HEK293T (cell line): ENCODE measurements at regions of chr17 and their contacts with region 1.

Region 1: GRCh38 chr17:19377602-19378392 is 501 bp upstream of the MAPK7 start:
- DNase-seq: peak; percentile 99

Region 2: GRCh38 chr17:19315104-19315503 is 62.7 kb before region 1 on chr17:
- CTCF ChIA-PET with region 1: no interaction called
- POLR2A ChIA-PET with region 1: no interaction called
- DNase-seq: no peak

Region 3: GRCh38 chr17:19398301-19399181 is 20.7 kb after region 1 on chr17:
- CTCF ChIA-PET with region 1: interaction called, 3 read pairs
- POLR2A ChIA-PET with region 1: interaction called, 112 read pairs
- DNase-seq: no peak

Region 4: DNA sequence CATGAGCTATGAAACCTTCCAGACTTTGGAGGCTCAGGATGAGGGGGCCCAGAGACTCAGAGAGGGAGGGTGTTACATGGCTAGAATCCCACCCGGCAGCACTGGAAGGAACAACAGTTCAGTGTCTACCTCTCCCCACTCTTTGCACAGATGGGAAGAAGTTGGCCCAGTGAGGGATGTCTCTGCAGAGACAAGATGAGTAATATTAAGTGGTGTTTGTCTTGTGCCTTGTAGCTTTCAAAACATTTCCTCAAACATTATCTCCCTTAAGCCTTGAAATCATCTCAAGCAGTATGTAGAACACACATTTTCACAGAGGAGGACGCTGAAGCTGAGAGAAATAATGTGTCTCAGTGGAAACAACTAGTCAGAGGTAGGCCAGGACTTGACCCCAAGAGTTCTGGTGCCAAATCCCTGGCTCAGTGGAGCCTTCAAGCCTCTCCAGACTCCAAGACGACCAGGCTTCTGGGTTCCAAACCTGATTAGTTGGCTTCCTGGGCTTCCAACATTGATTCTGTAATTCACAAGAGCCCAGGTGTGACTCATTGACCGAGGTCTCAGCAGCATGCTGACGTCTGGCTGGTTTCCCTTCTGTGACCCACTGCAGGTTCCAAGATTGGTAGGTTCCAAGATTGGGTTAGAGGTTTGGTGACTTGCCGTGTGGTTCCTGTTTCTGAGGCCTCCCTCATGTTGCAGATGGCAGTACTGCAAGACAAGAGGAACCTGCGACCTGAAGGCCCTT is 40.6 kb after region 1 on chr17:
- CTCF ChIA-PET with region 1: no interaction called
- POLR2A ChIA-PET with region 1: interaction called, 10 read pairs
- DNase-seq: no peak

Region 5: GRCh38 chr17:19447085-19447583 is 69.3 kb after region 1 on chr17:
- CTCF ChIA-PET with region 1: interaction called, 6 read pairs
- POLR2A ChIA-PET with region 1: interaction called, 16 read pairs
- DNase-seq: peak; percentile 75

Region 6: GRCh38 chr17:19546289-19547065 is 168.7 kb after region 1 on chr17:
- CTCF ChIA-PET with region 1: no interaction called
- POLR2A ChIA-PET with region 1: no interaction called
- DNase-seq: no peak